Stomach (tissue), 19 donors: ENCODE measurements at regions of chr18 and their contacts with region 1.

Region 1: GRCh38 chr18:11872479-11873136 is 21.4 kb downstream of the CHMP1B start:
- DNase-seq: peak; percentile 47 to 56
- H3K4me3 ChIP-seq: no peak overlapping the region
- H3K27ac ChIP-seq: peak overlapping the region in 1 of 5 donors; percentile 8
- H3K4me1 ChIP-seq: peaks cover 0 to 6% (median 2%) of the 10 kb centered on the region in 4 donors
- H3K27me3 ChIP-seq: no peaks in the 10 kb centered on the region
- CTCF ChIP-seq: peak in 4 of 7 experiments; percentile 20 to 51 (median 34)
- EP300 ChIP-seq: no peak
- POLR2A ChIP-seq: no peak

Region 2: DNA sequence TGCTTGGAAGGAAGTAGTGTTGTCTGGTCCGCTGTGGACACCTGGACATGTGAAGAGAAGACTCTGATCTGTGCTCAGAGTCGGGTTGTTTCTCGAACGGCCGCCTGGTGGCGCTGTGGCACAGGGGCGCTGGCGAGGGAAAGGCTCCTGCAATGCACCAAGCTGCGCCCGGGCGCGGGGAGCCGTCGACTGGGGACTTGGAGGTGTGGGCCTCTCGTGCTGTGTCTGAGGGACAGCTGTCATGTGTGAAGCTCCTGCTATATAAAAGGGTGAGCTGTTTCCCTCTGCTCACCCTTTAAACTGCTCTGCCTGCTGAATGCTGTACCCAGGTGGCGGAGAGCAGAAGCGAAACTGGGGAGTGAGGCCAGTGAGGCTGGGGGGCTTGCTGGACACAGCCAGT is 139.6 kb before region 1 on chr18:
- intact Hi-C with region 1: loop called (anchors 10 kb)
- DNase-seq: peak; percentile 81 to 88
- H3K4me3 ChIP-seq: peak overlapping the region; percentile 19 to 35 (median 26)
- H3K27ac ChIP-seq: no peak overlapping the region
- H3K4me1 ChIP-seq: peaks cover 0 to 9% (median 7%) of the 10 kb centered on the region in 4 donors
- H3K27me3 ChIP-seq: peaks cover 0 to 11% (median 5%) of the 10 kb centered on the region in 3 donors
- CTCF ChIP-seq: peak in 5 of 7 experiments; percentile 70 to 92 (median 80)
- EP300 ChIP-seq: no peak
- POLR2A ChIP-seq: no peak